Naive thymus-derived CD4-positive, alpha-beta T cell (primary cell): ENCODE measurements at regions of chr11 and their contacts with region 1.

Region 1: GRCh38 chr11:94973099-94973968 is at the starts of genes CWC15 and KDM4D:
- DNase-seq: peak; percentile 84 to 94 (median 92)
- ATAC-seq: peak; percentile 100
- H3K4me3 ChIP-seq: peak within 1 kb of the TSS; percentile 81
- H3K4me3 Mint-ChIP-seq: peak within 1 kb of the TSS; percentile 88 to 100 (median 96)
- H3K27ac ChIP-seq: peak within 1 kb of the TSS; percentile 91
- H3K27ac Mint-ChIP-seq: peak within 1 kb of the TSS; percentile 92 to 100 (median 96)
- H3K4me1 ChIP-seq: peaks cover 9 to 13% of the 10 kb centered on the region in 2 donors
- H3K4me1 Mint-ChIP-seq: peaks cover 17 to 63% (median 39%) of the 10 kb centered on the region in 7 donors
- H3K27me3 ChIP-seq: no peaks in the 10 kb centered on the region
- H3K27me3 Mint-ChIP-seq: no peaks in the 10 kb centered on the region
- total RNA-seq, gene CWC15: 64.1 to 94.7 (median 66.8) TPM
- total RNA-seq, gene KDM4D: 0.32 to 0.70 (median 0.68) TPM

Region 2: GRCh38 chr11:93197380-93198214 is 1775.7 kb before region 1 on chr11 and contains the start of gene SLC36A4:
- CTCF ChIA-PET with region 1: no interaction called
- POLR2A ChIA-PET with region 1: no interaction called
- intact Hi-C with region 1: loop called in 1 of 2 experiments (anchors 5 kb)
- DNase-seq: peak; percentile 78 to 90 (median 88)
- ATAC-seq: peak; percentile 94
- H3K4me3 ChIP-seq: peak within 1 kb of the TSS; percentile 54
- H3K4me3 Mint-ChIP-seq: peak within 1 kb of the TSS; percentile 88 to 98 (median 95)
- H3K27ac ChIP-seq: peak within 1 kb of the TSS; percentile 96
- H3K27ac Mint-ChIP-seq: peak within 1 kb of the TSS; percentile 87 to 99 (median 97)
- H3K4me1 ChIP-seq: peaks cover 0 to 4% of the 10 kb centered on the region in 2 donors
- H3K4me1 Mint-ChIP-seq: peaks cover 15 to 40% (median 30%) of the 10 kb centered on the region in 7 donors
- H3K27me3 ChIP-seq: no peaks in the 10 kb centered on the region
- H3K27me3 Mint-ChIP-seq: peaks cover 0 to 24% (median 5%) of the 10 kb centered on the region in 5 donors
- total RNA-seq, gene SLC36A4: 12.0 to 22.0 (median 20.0) TPM

Region 3: DNA sequence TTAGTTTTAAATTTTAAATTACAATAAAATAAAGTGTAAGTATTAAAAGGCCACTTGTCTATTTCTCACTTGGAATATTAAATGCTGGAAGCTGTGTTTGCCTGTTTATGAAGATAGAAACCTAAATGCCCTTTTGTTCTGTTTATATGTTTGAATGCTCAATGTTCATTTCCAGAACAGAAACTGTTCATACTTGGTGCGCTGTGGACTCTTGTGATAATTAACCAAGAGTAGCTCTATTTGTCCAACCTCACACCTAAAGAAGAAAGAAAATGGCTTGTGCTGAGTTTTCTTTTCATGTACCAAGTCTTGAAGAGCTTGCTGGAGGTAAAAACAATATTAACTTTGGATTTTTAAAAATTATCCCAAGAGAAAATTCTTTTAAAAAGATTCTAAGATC is 1226.2 kb before region 1 on chr11:
- CTCF ChIA-PET with region 1: no interaction called
- POLR2A ChIA-PET with region 1: no interaction called
- intact Hi-C with region 1: no loop called
- DNase-seq: no peak
- ATAC-seq: no peak
- H3K4me3 ChIP-seq: no peak overlapping the region
- H3K4me3 Mint-ChIP-seq: no peak overlapping the region
- H3K27ac ChIP-seq: no peak overlapping the region
- H3K27ac Mint-ChIP-seq: no peak overlapping the region
- H3K4me1 ChIP-seq: peaks cover 0 to 4% of the 10 kb centered on the region in 2 donors
- H3K4me1 Mint-ChIP-seq: peaks cover 10 to 51% (median 26%) of the 10 kb centered on the region in 7 donors
- H3K27me3 ChIP-seq: no peaks in the 10 kb centered on the region
- H3K27me3 Mint-ChIP-seq: no peaks in the 10 kb centered on the region

Region 4: DNA sequence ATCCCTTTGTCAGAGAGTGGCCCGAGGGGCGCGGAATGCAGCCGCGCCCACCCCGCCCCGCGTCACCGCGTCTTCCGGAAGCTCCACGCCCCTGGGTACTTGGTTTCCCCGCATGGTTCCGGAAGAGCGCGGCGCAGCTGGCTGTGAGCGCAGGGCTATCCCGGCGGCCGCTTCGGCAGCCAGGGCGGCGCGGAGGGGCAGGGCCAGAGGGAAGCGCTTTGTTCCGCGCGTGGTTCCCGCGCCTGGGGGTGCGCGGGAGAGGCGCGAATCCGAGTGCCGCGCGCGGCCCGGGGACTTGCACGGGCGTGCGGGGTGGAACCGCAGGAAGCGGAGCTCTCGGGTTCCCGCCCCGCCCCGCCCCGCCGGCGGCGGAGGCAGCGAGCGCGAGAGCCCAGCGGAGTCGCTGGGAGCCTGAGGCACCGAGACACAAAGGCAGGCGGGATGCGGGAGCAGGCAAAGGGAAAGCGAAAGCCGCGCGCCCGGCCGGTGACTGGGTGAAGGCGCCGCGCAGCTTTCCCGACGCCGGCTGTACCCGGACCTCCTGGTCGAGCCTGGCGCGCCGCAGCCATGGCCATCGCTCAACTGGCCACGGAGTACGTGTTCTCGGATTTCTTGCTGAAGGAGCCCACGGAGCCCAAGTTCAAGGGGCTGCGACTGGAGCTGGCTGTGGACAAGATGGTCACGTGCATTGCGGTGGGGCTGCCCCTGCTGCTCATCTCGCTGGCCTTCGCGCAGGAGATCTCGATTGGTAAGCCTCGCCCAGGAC is 844.4 kb before region 1 on chr11 and contains the start of gene PANX1:
- CTCF ChIA-PET with region 1: no interaction called
- POLR2A ChIA-PET with region 1: no interaction called
- intact Hi-C with region 1: loop called (anchors 1 to 2 kb)
- DNase-seq: peak; percentile 48 to 80 (median 74)
- ATAC-seq: peak; percentile 87
- H3K4me3 ChIP-seq: peak within 1 kb of the TSS; percentile 97
- H3K4me3 Mint-ChIP-seq: peak within 1 kb of the TSS in 2 of 10 donors; percentile 85 to 92
- H3K27ac ChIP-seq: peak within 1 kb of the TSS; percentile 73
- H3K27ac Mint-ChIP-seq: peak within 1 kb of the TSS; percentile 77 to 96 (median 89)
- H3K4me1 ChIP-seq: peaks cover 21 to 29% of the 10 kb centered on the region in 2 donors
- H3K4me1 Mint-ChIP-seq: peaks cover 18 to 32% (median 27%) of the 10 kb centered on the region in 7 donors
- H3K27me3 ChIP-seq: no peaks in the 10 kb centered on the region
- H3K27me3 Mint-ChIP-seq: no peaks in the 10 kb centered on the region
- total RNA-seq, gene PANX1: 5.6 to 14.8 (median 6.1) TPM

Region 5: DNA sequence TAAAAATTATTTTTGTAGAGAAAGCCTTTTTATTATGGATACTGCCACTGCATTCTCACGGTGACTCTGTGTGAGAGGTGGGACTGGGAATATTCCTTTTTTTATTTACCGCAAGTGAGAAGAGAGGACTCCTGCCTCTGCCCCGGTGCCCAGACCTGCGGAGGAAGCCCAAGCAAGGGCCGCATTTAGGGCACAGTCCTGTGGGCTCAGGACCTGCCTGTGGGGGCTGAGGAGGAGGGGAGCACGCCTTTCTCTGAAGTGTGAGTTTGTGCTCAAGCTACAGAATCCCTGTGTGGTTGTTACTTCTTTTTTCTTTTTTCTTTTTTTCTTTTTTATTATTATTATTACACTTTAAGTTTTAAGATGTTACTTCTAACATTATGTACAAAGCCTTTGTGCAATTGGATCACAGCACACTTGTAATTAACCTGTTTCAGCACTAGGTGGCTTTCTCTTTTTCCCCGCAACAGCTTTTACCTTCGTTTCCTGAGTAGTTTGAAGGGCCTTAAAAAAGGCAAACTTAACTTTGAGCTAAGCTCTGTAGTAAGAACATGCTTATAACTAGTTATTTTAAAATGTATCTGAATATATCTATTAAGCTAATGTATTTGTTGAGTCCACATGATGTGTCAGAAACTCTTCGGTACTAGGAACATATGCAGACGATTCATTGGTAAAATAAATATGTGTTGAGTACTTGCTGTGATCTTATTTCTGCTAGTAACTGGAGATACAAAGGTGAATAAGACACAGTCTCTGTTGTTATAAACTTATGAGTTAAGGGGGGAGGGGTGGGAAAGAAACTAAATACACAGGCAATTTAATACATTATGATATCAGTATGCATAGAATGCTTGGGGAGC is 186.8 kb before region 1 on chr11:
- CTCF ChIA-PET with region 1: no interaction called
- POLR2A ChIA-PET with region 1: no interaction called
- intact Hi-C with region 1: loop called in 1 of 2 experiments (anchors 5 kb)
- DNase-seq: peak in 5 of 9 donors; percentile 18 to 52 (median 42)
- ATAC-seq: peak; percentile 63
- H3K4me3 ChIP-seq: no peak overlapping the region
- H3K4me3 Mint-ChIP-seq: no peak overlapping the region
- H3K27ac ChIP-seq: no peak overlapping the region
- H3K27ac Mint-ChIP-seq: no peak overlapping the region
- H3K4me1 ChIP-seq: no peaks in the 10 kb centered on the region
- H3K4me1 Mint-ChIP-seq: peaks cover 0 to 3% (median 0%) of the 10 kb centered on the region in 7 donors
- H3K27me3 ChIP-seq: no peaks in the 10 kb centered on the region
- H3K27me3 Mint-ChIP-seq: peaks cover 5 to 23% (median 9%) of the 10 kb centered on the region in 5 donors

Region 6: DNA sequence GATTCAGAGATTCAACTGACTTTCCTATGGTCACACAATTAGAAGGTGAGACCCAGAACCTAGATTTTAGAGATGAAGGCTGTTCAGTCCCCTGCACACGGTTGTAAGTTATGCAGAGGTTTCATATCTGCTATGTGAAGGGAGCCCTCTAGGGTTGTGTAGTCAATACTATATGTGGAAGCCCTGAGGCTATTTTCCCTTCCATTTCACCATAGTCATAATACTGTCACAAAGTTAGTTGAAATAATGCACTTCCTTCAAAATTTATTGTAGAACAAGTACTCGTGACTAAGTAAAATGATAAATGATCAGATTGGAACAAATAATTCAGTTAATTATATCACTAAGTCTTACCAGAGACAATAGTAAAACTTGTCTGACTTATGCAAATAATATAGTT is 165.1 kb after region 1 on chr11:
- CTCF ChIA-PET with region 1: no interaction called
- POLR2A ChIA-PET with region 1: no interaction called
- intact Hi-C with region 1: loop called (anchors 5 kb)
- DNase-seq: no peak
- ATAC-seq: peak; percentile 57
- H3K4me3 ChIP-seq: no peak overlapping the region
- H3K4me3 Mint-ChIP-seq: no peak overlapping the region
- H3K27ac ChIP-seq: no peak overlapping the region
- H3K27ac Mint-ChIP-seq: no peak overlapping the region
- H3K4me1 ChIP-seq: no peaks in the 10 kb centered on the region
- H3K4me1 Mint-ChIP-seq: peaks cover 0 to 9% (median 0%) of the 10 kb centered on the region in 7 donors
- H3K27me3 ChIP-seq: no peaks in the 10 kb centered on the region
- H3K27me3 Mint-ChIP-seq: peaks cover 0 to 10% (median 6%) of the 10 kb centered on the region in 5 donors

Region 7: DNA sequence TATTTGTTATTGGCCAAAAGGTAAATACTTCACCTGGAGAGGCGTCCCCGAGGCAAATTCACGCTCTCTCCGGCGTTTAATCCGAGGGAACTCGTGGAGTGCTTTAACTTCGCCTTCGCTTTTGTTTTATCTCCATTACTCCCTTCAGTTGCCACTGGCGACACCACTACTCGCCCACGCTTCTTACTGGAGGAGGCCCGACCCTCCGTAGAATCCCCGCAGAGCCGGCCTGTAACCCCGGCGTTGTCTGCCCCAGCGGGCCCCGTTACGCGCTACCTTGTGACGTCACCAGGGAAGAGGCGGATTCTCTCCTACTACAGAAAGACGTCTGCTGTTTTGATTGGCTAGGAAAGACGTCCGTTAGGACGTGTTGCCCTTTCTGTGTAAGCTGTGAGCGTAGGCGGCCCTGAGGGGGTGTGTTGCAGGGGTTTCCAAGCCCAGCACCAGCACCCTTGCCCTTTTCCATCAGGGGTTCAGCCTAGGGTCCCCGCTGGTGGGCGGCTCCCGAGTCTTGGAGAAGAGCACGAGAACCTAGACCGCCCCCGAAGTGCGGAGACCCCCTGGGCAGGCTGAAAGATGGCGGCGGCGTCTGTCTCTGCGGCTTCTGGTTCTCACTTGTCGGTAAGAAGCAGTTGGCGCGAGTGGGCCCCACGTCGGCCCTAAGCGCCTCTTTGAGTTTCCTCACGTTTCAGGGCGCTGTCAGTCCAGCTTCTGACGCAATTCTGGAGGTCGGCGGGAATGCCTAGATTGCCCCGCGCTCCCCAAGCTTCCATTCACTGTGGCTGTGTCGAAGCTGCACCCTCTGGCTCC is 817.0 kb after region 1 on chr11 and contains the start of gene CEP57:
- CTCF ChIA-PET with region 1: no interaction called
- POLR2A ChIA-PET with region 1: interaction called, 4 read pairs
- intact Hi-C with region 1: loop called (anchors 1 kb)
- DNase-seq: peak; percentile 80 to 98 (median 96)
- ATAC-seq: peak; percentile 70
- H3K4me3 ChIP-seq: peak within 1 kb of the TSS; percentile 97
- H3K4me3 Mint-ChIP-seq: peak within 1 kb of the TSS; percentile 93 to 100 (median 100)
- H3K27ac ChIP-seq: peak within 1 kb of the TSS; percentile 99
- H3K27ac Mint-ChIP-seq: peak within 1 kb of the TSS; percentile 100
- H3K4me1 ChIP-seq: peaks cover 21 to 22% of the 10 kb centered on the region in 2 donors
- H3K4me1 Mint-ChIP-seq: peaks cover 47 to 74% (median 61%) of the 10 kb centered on the region in 7 donors
- H3K27me3 ChIP-seq: no peaks in the 10 kb centered on the region
- H3K27me3 Mint-ChIP-seq: no peaks in the 10 kb centered on the region
- total RNA-seq, gene CEP57: 47.8 to 72.3 (median 68.9) TPM